AG04449 (cell line): ENCODE measurements at regions of chr1 and their contacts with region 1.

Region 1: GRCh38 chr1:171485375-171486047 is at the start of gene PRRC2C:
- DNase-seq: peak; percentile 93
- H3K4me3 ChIP-seq: peak within 1 kb of the TSS; percentile 93
- CTCF ChIP-seq: peak; percentile 74

Region 2: GRCh38 chr1:171472183-171472647 is 13.3 kb before region 1 on chr1:
- CTCF ChIA-PET with region 1: interaction called, 14 read pairs
- POLR2A ChIA-PET with region 1: interaction called, 9 read pairs
- DNase-seq: no peak
- H3K4me3 ChIP-seq: no peak overlapping the region
- CTCF ChIP-seq: no peak

Region 3: DNA sequence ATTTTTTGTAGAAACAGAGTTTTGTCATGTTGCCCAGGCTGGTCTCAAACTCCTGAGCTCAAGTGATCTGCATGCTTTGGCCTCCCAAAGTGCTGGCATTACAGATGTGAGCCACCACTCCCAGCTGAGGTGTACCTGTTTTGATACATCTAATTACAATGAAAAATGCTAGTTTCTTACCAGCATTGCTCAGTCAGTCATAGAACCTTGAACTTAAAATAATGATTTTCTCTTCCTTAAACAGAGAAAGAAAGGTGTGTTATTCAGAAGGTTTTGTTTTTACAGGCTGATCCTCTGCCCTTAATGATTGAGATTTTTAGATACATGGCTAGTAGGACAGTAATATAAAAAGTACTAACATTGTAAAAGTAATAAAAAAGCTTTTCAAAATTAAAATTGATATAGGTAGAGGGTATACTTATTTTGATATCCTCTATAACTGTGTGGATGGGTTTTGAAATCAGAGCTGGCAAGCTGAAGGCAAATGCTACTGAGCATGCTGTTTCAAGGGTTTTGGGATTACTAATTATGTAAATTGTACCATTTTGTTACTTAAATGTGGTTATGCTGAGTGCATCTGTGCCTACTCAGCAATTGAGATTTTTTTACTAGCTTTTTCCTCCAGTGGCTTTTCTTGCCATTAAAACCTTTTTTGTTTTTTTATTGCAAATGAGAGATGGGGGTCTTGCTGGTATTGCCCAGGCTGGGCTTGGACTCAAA is 16.0 kb after region 1 on chr1:
- CTCF ChIA-PET with region 1: interaction called, 41 read pairs
- POLR2A ChIA-PET with region 1: interaction called, 3 read pairs
- DNase-seq: no peak
- H3K4me3 ChIP-seq: no peak overlapping the region
- CTCF ChIP-seq: no peak

Region 4: GRCh38 chr1:171545523-171545922 is 60.0 kb after region 1 on chr1:
- CTCF ChIA-PET with region 1: interaction called, 10 read pairs
- POLR2A ChIA-PET with region 1: no interaction called
- DNase-seq: no peak
- H3K4me3 ChIP-seq: no peak overlapping the region
- CTCF ChIP-seq: no peak

Region 5: DNA sequence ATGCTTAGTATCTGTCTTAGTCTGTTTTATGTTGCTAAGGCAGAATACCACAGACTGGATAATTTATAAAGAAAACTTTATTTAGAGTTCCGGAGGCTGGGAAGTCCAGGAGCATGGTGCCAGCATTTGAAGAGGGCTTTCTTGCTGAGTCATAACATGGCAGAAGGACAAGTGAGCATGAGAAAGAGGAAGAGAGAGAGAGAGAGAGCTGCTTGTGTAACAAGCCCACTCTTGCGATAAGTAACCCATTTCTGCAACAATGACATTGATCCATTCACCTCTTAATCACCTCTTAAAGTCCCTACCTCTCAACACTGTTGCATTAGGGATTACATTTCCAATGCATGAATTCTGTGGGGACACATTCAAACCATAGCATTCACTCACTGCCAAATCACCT is 124.9 kb after region 1 on chr1:
- CTCF ChIA-PET with region 1: no interaction called
- POLR2A ChIA-PET with region 1: no interaction called
- DNase-seq: no peak
- H3K4me3 ChIP-seq: no peak overlapping the region
- CTCF ChIP-seq: no peak